Breast epithelium (tissue), 4 donors: ENCODE measurements at regions of chr13 and their contacts with region 1.

Region 1: GRCh38 chr13:83738407-83738806 is 143.9 kb downstream of the SLITRK1 start:
- DNase-seq: no peak
- H3K4me3 ChIP-seq: no peak overlapping the region
- H3K27ac ChIP-seq: no peak overlapping the region
- H3K4me1 ChIP-seq: no peaks in the 10 kb centered on the region
- H3K27me3 ChIP-seq: no peaks in the 10 kb centered on the region
- CTCF ChIP-seq: no peak
- POLR2A ChIP-seq: no peak

Region 2: DNA sequence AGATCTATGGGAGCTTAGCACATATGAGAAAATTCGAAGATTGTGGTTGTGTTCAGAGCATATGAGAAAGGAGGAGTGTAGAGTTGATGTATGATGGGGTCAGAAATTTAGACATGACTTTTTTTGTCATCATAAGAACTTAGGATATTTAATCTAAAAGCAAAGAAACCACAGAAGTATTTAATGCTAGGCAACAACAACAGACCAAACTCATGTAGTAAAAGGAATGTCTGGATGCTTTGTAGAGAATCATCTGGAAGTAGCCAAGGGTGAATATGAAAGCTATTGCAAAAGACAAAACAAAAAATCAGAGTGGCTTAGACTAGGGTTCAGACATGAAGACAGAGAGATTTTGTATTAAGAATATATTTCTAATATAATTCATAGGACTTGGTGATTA is 46.4 kb before region 1 on chr13:
- intact Hi-C with region 1: loop called (anchors 2 kb)
- DNase-seq: no peak
- H3K4me3 ChIP-seq: no peak overlapping the region
- H3K27ac ChIP-seq: no peak overlapping the region
- H3K4me1 ChIP-seq: no peaks in the 10 kb centered on the region
- H3K27me3 ChIP-seq: no peaks in the 10 kb centered on the region
- CTCF ChIP-seq: no peak
- POLR2A ChIP-seq: no peak

Region 3: GRCh38 chr13:83752141-83752540 is 13.7 kb after region 1 on chr13:
- intact Hi-C with region 1: no loop called
- DNase-seq: no peak
- H3K4me3 ChIP-seq: no peak overlapping the region
- H3K27ac ChIP-seq: no peak overlapping the region
- H3K4me1 ChIP-seq: no peaks in the 10 kb centered on the region
- H3K27me3 ChIP-seq: no peaks in the 10 kb centered on the region
- CTCF ChIP-seq: no peak
- POLR2A ChIP-seq: no peak

Region 4: DNA sequence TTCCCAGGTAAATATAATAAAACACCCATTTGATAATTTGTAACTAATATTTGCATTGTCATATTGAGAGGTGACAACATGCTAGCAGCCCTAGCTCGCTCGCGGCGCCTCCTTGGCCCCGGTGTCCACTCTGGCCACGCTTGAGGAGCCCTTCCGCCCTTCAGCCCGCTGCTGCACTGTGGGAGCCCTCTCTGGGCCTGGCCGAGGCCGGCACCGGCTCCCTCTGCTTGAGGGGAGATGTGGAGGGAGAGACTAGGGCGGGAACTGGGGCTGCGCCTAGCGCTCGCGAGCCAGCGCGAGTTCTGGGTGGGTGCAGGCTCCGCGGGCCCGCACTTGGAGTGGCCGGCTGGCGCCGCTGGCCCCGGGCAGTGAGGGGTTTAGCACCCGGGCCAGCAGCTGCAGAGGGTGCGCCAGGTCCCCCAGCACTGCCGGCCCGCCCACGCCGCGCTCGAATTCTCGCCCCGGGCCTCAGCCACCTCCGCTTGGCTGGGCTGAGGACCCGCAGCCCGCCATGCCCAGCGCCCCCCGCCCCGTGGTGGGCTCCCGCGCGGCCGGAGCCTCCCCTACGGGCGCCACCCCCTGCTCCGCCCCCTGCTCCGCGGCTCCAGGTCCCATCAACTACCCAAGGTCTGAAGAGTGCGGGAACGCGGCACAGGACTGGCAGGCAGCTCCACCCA is 1466.4 kb after region 1 on chr13:
- intact Hi-C with region 1: no loop called
- DNase-seq: no peak
- H3K4me3 ChIP-seq: no peak overlapping the region
- H3K27ac ChIP-seq: no peak overlapping the region
- H3K4me1 ChIP-seq: no peaks in the 10 kb centered on the region
- H3K27me3 ChIP-seq: no peaks in the 10 kb centered on the region
- CTCF ChIP-seq: no peak
- POLR2A ChIP-seq: no peak